SK-N-SH (cell line): ENCODE measurements at regions of chr1 and their contacts with region 1.

Region 1: DNA sequence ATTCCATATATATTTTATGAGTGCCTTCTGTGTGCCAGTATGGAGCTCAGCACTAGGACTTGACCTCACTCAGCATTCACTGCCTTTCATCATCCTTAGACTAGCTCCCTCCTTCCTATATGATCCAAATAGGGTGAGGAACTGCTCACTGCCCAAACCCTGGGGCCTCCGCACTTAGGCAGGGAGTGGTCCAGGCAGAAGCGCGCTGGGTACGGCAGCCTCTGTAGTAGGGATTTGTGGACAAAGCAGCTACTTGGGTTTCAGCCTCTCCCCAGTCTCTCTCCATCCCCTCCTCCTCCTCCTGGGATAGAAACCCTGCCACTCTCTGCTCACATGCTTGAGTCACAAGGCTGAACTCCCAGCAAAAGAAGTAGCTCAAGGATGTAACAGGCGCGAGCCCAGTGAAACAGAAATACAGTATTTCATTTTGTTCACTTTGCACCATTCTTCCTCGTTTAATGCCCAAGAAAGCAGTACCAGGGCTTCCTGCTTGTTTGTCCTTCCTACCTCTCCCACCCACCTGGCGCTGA is 32.9 kb downstream of the PLEKHA6 start:
- DNase-seq: no peak
- H3K4me3 ChIP-seq: no peak overlapping the region
- H3K27ac ChIP-seq: peak overlapping the region in 1 of 2 experiments; percentile 80; a peak in 2 of 4 replicates
- H3K4me1 ChIP-seq: peaks cover 0 to 37% of the 10 kb centered on the region in 2 experiments; a peak in 2 of 4 replicates
- H3K27me3 ChIP-seq: peaks cover 9% of the 10 kb centered on the region; the same call in 1 of the 2 replicates
- CTCF ChIP-seq: no peak
- EP300 ChIP-seq: no peak
- RAD21 ChIP-seq: no peak

Region 2: DNA sequence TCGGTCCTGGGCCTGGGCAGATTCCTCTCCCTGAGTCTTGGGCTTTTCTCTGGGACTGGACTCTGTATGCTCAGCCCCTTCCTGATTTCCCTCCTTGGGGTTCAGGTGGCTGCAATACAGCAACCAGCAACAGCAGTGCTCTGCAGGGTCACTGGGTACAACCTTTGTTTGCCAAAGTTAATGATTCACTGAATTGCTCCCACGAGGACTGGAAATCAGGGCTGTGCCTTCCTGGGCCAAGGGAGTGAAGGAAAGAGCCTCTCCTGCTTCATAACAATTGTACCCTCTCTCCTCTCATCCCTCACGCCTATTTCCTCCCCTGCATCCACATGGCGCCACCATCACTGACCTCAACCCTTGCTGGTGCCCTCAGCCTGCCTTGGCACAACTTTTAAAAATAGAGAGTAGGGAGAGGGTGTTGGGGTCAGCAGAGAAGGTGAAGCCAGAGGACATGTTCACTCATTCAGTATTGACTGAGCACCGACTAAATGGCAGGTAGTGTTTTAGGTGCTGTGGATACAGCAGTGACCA is 60.3 kb before region 1 on chr1:
- CTCF ChIA-PET with region 1: no interaction called
- POLR2A ChIA-PET with region 1: no interaction called
- DNase-seq: no peak
- H3K4me3 ChIP-seq: no peak overlapping the region
- H3K27ac ChIP-seq: peak overlapping the region in 1 of 2 experiments; percentile 23; a peak in 1 of 4 replicates
- H3K4me1 ChIP-seq: peaks cover 0 to 49% of the 10 kb centered on the region in 2 experiments; a peak in 1 of 4 replicates
- H3K27me3 ChIP-seq: no peaks in the 10 kb centered on the region; the same call in 1 of the 2 replicates
- CTCF ChIP-seq: no peak
- EP300 ChIP-seq: no peak
- RAD21 ChIP-seq: no peak

Region 3: DNA sequence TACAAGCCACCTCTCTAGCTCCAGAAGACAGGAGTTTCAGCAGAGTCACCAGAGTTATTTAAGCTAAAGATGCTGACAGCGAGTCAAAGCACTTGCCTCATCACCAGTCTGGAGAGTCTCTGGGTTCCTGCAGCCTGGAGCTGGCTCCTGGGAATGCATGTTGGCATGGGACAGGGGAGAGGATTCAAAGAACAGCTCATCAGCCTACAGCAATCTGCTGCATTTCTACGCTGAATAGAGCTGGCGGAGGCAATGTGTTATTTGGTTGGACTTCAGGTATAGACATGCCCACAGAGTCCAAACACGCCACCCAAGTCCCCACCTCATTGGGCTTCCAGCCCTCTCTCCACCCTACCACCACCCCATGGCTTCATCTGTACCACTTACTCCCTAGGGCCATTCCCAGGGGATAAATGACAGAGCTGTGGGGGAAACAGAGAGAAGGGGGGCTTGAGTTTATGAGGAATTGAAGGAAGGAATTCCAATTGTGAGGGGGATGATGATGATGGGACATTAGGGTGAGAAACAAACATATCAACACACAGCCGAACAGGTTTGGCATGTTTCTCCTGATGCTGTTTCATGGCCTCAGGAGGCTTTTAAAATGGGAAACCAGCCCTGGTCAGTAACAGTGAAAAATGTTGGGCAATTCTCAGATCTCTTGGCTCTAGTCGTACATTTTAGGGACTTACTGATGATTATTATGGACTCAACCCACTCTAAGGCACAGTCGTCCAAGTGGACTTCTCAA is 25.5 kb before region 1 on chr1:
- CTCF ChIA-PET with region 1: interaction called, 5 read pairs
- POLR2A ChIA-PET with region 1: interaction called, 12 read pairs
- DNase-seq: no peak
- H3K4me3 ChIP-seq: no peak overlapping the region
- H3K27ac ChIP-seq: peak overlapping the region in 1 of 2 experiments; percentile 100; a peak in 2 of 4 replicates
- H3K4me1 ChIP-seq: peaks cover 0 to 56% of the 10 kb centered on the region in 2 experiments; a peak in 2 of 4 replicates
- H3K27me3 ChIP-seq: peaks cover 20% of the 10 kb centered on the region
- CTCF ChIP-seq: no peak
- EP300 ChIP-seq: no peak
- RAD21 ChIP-seq: no peak

Region 4: GRCh38 chr1:204314171-204314895 is 12.5 kb before region 1 on chr1:
- CTCF ChIA-PET with region 1: interaction called, 15 read pairs
- POLR2A ChIA-PET with region 1: interaction called, 4 read pairs
- DNase-seq: no peak
- H3K4me3 ChIP-seq: no peak overlapping the region
- H3K27ac ChIP-seq: no peak overlapping the region; a peak in 1 of 4 replicates
- H3K4me1 ChIP-seq: peaks cover 0 to 55% of the 10 kb centered on the region in 2 experiments; a peak in 2 of 4 replicates
- H3K27me3 ChIP-seq: 0 out of 2 replicates have a peak, but pooled peaks cover 4% of the 10 kb centered on the region
- CTCF ChIP-seq: no peak
- EP300 ChIP-seq: no peak
- RAD21 ChIP-seq: no peak

Region 5: DNA sequence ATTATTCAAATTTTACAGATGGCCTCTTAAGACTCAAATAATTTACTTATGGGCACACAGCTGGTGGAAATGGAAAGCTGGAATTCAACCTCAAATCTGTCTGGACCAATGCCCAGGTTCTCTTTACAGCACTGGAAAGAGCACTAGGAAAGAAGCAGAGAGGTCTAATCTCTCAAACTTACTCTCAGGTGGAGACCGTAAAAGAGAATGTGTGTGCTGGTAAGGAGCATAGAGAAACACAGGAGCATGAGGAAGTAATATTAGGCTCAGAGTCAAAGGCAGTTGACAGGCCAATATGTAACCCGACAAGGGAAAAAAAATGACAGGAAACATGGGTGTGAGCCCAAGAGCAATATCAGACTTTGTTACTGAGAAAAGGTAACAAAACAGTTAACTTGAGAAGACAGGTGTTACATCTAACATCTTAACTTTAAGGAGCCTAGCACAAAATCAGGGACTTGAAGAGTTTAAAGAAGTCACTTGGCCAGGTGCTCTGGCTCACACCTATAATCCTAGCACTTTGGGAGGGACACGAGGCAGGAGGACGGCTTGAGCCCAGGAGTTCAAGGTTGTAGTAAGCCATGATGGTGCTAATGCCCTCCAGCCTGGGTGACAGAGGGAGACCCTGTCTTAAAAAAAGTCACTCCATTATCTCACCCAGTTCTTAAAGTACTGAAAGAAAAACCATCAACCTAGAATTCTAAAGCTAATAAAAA is 64.1 kb after region 1 on chr1:
- CTCF ChIA-PET with region 1: no interaction called
- POLR2A ChIA-PET with region 1: no interaction called
- DNase-seq: no peak
- H3K4me3 ChIP-seq: no peak overlapping the region
- H3K27ac ChIP-seq: no peak overlapping the region
- H3K4me1 ChIP-seq: peaks cover 0 to 2% of the 10 kb centered on the region in 2 experiments; a peak in 1 of 4 replicates
- H3K27me3 ChIP-seq: no peaks in the 10 kb centered on the region
- CTCF ChIP-seq: no peak
- EP300 ChIP-seq: no peak
- RAD21 ChIP-seq: no peak

Region 6: GRCh38 chr1:204426029-204426436 is 99.2 kb after region 1 on chr1:
- CTCF ChIA-PET with region 1: no interaction called
- POLR2A ChIA-PET with region 1: no interaction called
- DNase-seq: no peak
- H3K4me3 ChIP-seq: no peak overlapping the region
- H3K27ac ChIP-seq: peak overlapping the region in 1 of 2 experiments; percentile 78; a peak in 2 of 4 replicates
- H3K4me1 ChIP-seq: peaks cover 2 to 6% of the 10 kb centered on the region in 2 experiments; a peak in 2 of 4 replicates
- H3K27me3 ChIP-seq: no peaks in the 10 kb centered on the region
- CTCF ChIP-seq: no peak
- EP300 ChIP-seq: peak in 1 of 2 experiments; percentile 76; a peak in 2 of 4 replicates
- RAD21 ChIP-seq: no peak